Cardiac septum (tissue), 1 donor: ENCODE measurements at regions of chrX and their contacts with region 1.

Region 1: DNA sequence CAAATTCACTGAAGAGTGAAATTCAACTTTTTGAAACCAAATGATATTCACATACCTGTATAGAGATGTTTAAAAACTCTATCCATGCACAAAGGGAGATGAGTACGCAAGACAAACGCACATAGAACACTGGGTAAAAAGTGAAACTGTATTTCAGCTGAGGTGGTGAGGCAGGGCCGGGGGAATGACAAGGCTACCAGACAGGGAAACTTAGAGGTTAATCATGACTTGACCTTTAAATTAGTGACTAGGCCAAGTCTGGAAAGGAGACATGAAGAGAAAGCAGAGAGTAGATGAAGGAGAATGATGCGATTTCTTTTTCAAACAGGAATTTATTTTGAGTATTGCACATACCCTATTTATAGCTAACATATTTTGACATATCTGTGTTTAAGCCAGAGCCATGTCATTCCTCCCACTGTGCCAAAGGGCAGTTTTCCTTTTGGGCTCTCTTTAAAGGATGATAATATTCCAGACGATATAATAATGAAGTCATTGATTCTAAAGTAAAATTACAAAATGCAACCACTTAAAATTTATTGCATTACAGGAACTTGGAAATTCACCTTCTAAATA is 49.4 kb downstream of the ARHGEF6 start:
- DNase-seq: no peak

Region 2: DNA sequence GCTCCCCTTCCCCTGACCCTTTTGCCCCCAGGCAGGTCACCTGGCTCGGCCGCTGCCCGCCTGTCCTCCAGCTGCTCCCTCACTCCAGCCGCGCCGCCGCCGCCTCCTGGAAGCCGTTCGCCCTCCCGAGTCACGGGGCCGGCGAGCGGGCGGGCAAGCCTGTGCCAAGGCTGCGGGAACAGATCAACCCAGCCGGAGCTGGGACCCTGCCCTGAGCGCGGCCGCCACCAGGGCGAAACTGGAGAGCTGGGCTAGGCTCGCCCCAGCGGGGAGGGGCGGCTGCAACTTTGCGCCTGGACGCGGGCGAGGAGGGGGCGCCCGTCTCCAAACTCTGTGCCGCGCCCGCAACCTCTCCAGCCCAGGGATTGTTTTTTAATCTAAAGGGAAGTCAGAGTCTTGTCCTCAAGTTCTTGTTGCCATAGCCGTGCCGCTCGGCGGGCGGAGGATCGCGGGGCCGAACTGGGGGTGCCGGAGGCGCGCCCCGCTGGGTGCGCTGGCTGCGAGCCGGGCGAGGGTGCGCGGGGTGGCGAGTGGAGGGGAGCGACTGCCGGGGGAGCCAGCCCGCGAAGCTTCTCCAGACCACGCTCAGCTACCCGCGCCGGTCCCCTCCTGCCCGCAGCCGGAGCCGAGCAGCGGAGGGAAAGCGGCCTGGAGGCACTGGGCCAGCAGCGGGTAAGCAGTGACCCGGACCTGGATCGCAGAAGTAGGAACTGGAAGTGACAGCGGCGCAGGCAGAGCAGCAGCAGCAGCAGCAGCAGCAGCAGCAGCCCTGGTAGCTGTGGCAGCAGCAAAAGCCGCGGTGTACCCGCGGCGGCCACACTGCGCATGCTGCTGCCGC is 36.0 kb after region 1 on chrX:
- intact Hi-C with region 1: loop called (anchors 5 kb)
- DNase-seq: peak; percentile 88

Region 3: GRCh38 chrX:138298259-138298658 is 1567.0 kb after region 1 on chrX:
- intact Hi-C with region 1: no loop called
- DNase-seq: no peak